ENCODE measurements at regions of chr10 and their contacts with region 1.

Region 1: DNA sequence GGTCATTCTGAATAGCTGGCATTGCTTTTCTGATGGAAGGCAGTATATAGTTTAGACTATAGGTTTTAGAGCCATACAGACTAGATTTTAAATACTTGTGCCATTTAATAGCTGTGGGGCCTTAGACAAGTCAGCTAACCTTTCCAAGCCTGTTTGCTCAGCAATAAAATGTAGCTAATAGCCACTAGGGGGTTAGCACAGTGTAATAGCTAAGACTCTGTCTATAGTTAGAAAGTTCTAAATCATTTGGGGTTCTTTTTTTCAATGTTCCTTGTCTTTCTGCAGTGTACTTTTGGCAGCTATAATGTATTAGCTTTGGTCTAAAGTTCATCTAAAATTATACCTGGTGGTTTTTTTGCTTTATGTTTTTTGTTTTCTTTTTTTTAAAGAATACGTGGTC is 7.5 kb upstream of the KIFBP start:
- DNase-seq: peak in 1 of 4 experiments; percentile 22
- ATAC-seq: peak; percentile 68
- H3K4me3 ChIP-seq: no peak overlapping the region
- H3K27ac ChIP-seq: no peak overlapping the region
- H3K4me1 ChIP-seq: no peaks in the 10 kb centered on the region
- H3K27me3 ChIP-seq: no peaks in the 10 kb centered on the region
- CTCF ChIP-seq: peak in 2 of 3 experiments; percentile 33 to 53; a peak in 3 of 6 replicates
- EP300 ChIP-seq: no peak
- POLR2A ChIP-seq: 0 out of 2 replicates have a peak, but pooled peaks have one; percentile 16
- RAD21 ChIP-seq: no peak

Region 2: DNA sequence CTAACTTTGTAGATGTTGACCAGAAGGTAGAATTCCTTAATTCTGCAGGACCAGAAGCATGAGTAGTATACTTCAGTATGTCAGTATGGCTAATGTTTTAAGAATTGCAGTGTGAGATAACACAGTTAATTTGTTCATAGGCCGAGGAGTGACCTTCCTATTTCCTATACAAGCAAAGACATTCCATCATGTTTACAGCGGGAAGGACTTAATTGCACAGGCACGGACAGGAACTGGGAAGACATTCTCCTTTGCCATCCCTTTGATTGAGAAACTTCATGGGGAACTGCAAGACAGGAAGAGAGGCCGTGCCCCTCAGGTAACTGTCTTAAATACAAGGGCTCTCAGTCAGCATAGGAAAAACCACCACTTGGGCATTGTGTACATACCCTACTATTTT is 17.9 kb before region 1 on chr10:
- CTCF ChIA-PET with region 1: no interaction called
- POLR2A ChIA-PET with region 1: interaction called, 99 read pairs
- in situ Hi-C with region 1: no loop called
- intact Hi-C with region 1: no loop called
- DNase-seq: no peak
- ATAC-seq: no peak
- H3K4me3 ChIP-seq: no peak overlapping the region
- H3K27ac ChIP-seq: no peak overlapping the region
- H3K4me1 ChIP-seq: peaks cover 10 to 16% of the 10 kb centered on the region in 2 experiments; a peak in 4 of 5 replicates
- H3K27me3 ChIP-seq: no peaks in the 10 kb centered on the region
- CTCF ChIP-seq: no peak
- EP300 ChIP-seq: no peak
- POLR2A ChIP-seq: no peak
- RAD21 ChIP-seq: no peak

Region 3: DNA sequence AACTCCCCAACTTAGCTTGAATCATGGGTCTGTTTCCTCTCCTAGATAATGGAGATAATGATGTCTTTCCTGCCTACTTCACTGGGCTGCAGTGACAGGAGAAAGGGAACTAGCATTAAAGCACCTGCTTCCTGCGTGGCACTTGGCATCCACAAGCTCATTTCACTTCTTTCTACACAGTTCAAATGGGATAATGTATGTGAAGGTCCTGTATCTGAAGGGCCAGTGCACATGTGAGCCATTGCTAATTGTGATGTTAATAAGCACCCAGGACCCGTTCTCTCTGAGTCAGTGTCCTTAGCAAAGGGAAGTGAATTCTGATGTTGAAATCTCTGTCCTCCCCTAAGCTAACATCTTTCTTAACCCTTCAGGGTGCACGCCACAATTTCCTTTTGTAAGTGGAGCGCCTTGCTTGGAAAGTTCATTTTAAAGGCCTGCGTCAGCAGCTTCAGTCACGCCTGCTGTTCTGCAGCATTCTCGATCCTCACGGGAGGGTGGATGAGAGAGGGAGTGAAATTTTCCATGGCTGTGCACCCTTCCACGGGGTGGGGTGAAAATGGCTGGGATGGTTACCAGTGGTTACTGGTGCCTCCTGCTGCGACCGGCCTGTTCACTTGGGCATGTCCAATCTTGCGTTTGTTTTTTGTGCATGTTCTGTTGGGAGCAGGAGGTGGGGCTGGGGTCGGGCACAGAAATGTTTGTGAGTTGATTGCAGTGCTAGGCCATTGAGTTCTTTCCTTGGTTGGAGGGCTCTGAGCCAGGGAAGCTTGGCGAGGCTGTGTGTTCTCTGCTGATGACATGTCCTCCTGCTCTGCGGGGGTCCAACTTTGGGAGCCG is 356.4 kb after region 1 on chr10:
- CTCF ChIA-PET with region 1: no interaction called
- POLR2A ChIA-PET with region 1: no interaction called
- in situ Hi-C with region 1: no loop called
- intact Hi-C with region 1: no loop called
- DNase-seq: no peak
- ATAC-seq: no peak
- H3K4me3 ChIP-seq: no peak overlapping the region
- H3K27ac ChIP-seq: peak overlapping the region; percentile 21; the same call in 2 of the 3 replicates
- H3K4me1 ChIP-seq: peaks cover 53 to 58% of the 10 kb centered on the region in 2 experiments
- H3K27me3 ChIP-seq: no peaks in the 10 kb centered on the region
- CTCF ChIP-seq: no peak
- EP300 ChIP-seq: no peak
- POLR2A ChIP-seq: no peak
- RAD21 ChIP-seq: no peak

Region 4: DNA sequence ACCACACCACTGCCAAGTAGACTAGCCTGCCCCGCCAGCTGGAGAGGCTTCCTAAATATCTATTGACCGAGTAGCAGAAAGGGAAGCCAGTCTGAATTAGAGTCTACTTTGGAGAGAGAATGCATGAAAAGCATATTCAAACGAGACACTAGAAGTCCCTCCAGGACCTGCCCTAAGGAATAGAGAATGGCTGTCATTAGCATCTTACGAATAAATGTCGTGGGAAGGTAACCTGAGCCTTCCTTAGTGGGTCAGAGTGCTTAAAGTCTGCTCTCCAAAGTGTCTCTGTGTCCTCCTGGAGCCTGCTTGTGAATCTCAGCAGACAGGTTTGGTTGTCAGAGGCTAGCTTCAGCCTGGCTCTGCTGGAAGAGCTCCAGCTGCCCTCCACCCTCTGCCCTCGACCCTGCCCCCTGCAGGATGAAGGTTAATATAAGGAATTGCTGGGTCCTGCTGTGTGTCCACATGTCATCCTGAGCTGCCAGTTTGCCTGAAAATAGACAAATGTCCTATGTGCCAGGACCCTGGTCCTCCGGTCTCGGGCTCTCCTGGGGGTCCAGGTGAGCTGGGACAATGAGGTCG is 682.4 kb after region 1 on chr10:
- CTCF ChIA-PET with region 1: no interaction called
- POLR2A ChIA-PET with region 1: no interaction called
- in situ Hi-C with region 1: no loop called
- intact Hi-C with region 1: no loop called
- DNase-seq: peak; percentile 19 to 55 (median 48)
- ATAC-seq: peak; percentile 82
- H3K4me3 ChIP-seq: no peak overlapping the region
- H3K27ac ChIP-seq: no peak overlapping the region
- H3K4me1 ChIP-seq: no peaks in the 10 kb centered on the region
- H3K27me3 ChIP-seq: peaks cover 21 to 75% of the 10 kb centered on the region in 2 experiments; a peak in 4 of 5 replicates
- CTCF ChIP-seq: peak; percentile 36 to 45 (median 44); a peak in 5 of 6 replicates
- EP300 ChIP-seq: no peak
- POLR2A ChIP-seq: no peak
- RAD21 ChIP-seq: no peak

Measured in K562 (cell line).